ENCODE measurements at regions of chr12 and their contacts with region 1.

Region 1: GRCh38 chr12:59808317-59808910 is 212.6 kb downstream of the SLC16A7 start:
- DNase-seq: no peak
- ATAC-seq: peak in 1 of 4 donors; percentile 65
- H3K4me3 ChIP-seq: no peak overlapping the region
- H3K27ac ChIP-seq: no peak overlapping the region
- H3K4me1 ChIP-seq: no peaks in the 10 kb centered on the region
- H3K27me3 ChIP-seq: no peaks in the 10 kb centered on the region
- CTCF ChIP-seq: peak; percentile 57

Region 2: GRCh38 chr12:59431266-59431665 is 377.1 kb before region 1 on chr12:
- intact Hi-C with region 1: loop called in 1 of 2 experiments (anchors 10 kb)
- DNase-seq: no peak
- ATAC-seq: no peak
- H3K4me3 ChIP-seq: no peak overlapping the region
- H3K27ac ChIP-seq: no peak overlapping the region
- H3K4me1 ChIP-seq: no peaks in the 10 kb centered on the region
- H3K27me3 ChIP-seq: no peaks in the 10 kb centered on the region
- CTCF ChIP-seq: no peak

Region 3: DNA sequence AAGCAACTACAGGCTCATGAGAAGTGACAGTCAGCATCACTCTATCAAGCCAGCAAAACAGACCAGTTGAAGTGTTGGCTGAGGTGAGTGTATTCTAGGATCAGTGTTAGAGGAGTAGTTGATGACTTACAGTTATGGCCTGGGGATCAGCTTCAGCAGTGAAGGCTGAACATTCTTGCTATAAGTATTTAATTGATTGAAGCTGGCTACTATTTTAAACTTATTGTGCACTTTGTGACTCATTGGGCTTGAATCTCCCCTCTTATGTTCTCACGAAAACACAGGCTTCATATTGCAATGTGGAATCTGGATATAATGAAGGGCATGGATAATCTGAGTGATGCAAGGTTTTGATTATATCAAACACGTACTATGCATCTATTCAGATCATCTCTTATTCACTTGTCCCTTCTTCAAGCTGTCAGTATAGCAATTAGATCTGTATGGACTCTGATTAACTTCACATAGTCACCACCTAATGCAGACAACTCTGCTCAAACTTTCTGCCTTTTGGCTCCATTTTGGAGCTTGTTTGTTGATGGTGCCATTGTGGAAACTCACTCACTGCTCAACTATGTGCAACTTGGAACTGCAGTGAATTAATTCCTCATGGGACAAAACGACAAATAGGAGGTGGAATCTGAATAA is 96.6 kb after region 1 on chr12:
- intact Hi-C with region 1: no loop called
- DNase-seq: no peak
- ATAC-seq: no peak
- H3K4me3 ChIP-seq: no peak overlapping the region
- H3K27ac ChIP-seq: no peak overlapping the region
- H3K4me1 ChIP-seq: no peaks in the 10 kb centered on the region
- H3K27me3 ChIP-seq: no peaks in the 10 kb centered on the region
- CTCF ChIP-seq: no peak

Measured in psoas muscle (tissue), 8 donors.